Activated CD4-positive, alpha-beta memory T cell treated with anti-CD3 and anti-CD28 coated beads, Interleukin-2, amount 10 ng/mL, durations not matched to agents 7 days and 5 days (primary cell): ENCODE measurements at regions of chr16 and their contacts with region 1.

Region 1: GRCh38 chr16:50024684-50025536 is at the start of gene CNEP1R1:
- DNase-seq: peak; percentile 95
- H3K4me3 Mint-ChIP-seq: peak within 1 kb of the TSS; percentile 96
- H3K27ac Mint-ChIP-seq: peak within 1 kb of the TSS; percentile 87
- H3K4me1 Mint-ChIP-seq: peaks cover 29% of the 10 kb centered on the region
- H3K27me3 Mint-ChIP-seq: peaks cover 5% of the 10 kb centered on the region
- total RNA-seq, gene CNEP1R1: 30.1 to 36.1 TPM

Region 2: GRCh38 chr16:49709057-49709456 is 315.9 kb before region 1 on chr16:
- CTCF ChIA-PET with region 1: no interaction called
- POLR2A ChIA-PET with region 1: no interaction called
- DNase-seq: no peak
- H3K4me3 Mint-ChIP-seq: no peak overlapping the region
- H3K27ac Mint-ChIP-seq: no peak overlapping the region
- H3K4me1 Mint-ChIP-seq: no peaks in the 10 kb centered on the region
- H3K27me3 Mint-ChIP-seq: no peaks in the 10 kb centered on the region

Region 3: GRCh38 chr16:50038756-50039529 is 14.0 kb after region 1 on chr16:
- CTCF ChIA-PET with region 1: interaction called, 42 read pairs
- POLR2A ChIA-PET with region 1: interaction called, 11 read pairs
- DNase-seq: no peak
- H3K4me3 Mint-ChIP-seq: no peak overlapping the region
- H3K27ac Mint-ChIP-seq: no peak overlapping the region
- H3K4me1 Mint-ChIP-seq: peaks cover 13% of the 10 kb centered on the region
- H3K27me3 Mint-ChIP-seq: peaks cover 14% of the 10 kb centered on the region

Region 4: GRCh38 chr16:50152807-50153452 is 128.0 kb after region 1 on chr16 and contains the start of gene TENT4B:
- CTCF ChIA-PET with region 1: interaction called, 15 read pairs
- POLR2A ChIA-PET with region 1: interaction called, 13 read pairs
- DNase-seq: peak; percentile 89
- H3K4me3 Mint-ChIP-seq: peak within 1 kb of the TSS; percentile 77
- H3K27ac Mint-ChIP-seq: peak within 1 kb of the TSS; percentile 78
- H3K4me1 Mint-ChIP-seq: peaks cover 31% of the 10 kb centered on the region
- H3K27me3 Mint-ChIP-seq: no peaks in the 10 kb centered on the region
- total RNA-seq, gene TENT4B: 17.5 to 18.0 TPM

Region 5: DNA sequence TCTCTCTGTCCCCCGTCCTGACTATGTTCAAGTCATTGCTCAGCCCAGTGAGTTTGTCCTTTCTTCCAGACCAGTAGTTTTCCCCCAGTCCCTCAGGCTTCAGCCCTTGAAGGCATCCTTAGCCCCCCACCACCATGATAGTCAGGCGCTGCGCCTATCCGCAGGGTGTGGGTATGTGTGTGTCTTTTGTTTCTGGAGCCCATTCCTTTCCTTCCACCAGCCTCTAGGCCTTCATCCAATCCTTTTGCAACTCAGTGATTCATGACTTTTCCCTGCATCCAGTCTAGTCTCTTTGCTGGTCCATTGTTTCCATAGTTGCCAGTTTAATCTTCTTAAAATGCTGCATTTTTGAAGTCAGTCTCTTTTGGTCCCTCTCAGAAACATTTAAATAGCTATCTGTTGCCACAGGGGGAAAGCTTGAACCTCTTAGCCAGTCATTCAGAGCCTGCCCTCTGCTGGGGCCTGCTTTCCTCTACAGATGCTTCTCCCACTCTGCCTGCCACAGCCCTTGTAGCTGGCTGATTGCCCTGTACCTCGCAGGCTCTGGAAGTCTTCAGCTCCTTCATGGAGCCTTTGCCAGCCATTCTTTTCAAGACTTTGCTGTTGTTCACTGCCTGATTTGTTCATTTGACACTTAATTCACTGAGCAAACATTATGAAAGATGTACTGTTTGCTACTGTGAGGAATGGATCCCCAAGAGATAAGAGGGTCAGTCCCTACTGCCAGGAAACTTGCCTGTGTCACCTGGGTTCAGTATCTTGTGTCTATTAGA is 185.5 kb after region 1 on chr16:
- CTCF ChIA-PET with region 1: interaction called, 191 read pairs
- POLR2A ChIA-PET with region 1: interaction called, 26 read pairs
- DNase-seq: peak; percentile 76
- H3K4me3 Mint-ChIP-seq: no peak overlapping the region
- H3K27ac Mint-ChIP-seq: peak overlapping the region; percentile 4
- H3K4me1 Mint-ChIP-seq: peaks cover 35% of the 10 kb centered on the region
- H3K27me3 Mint-ChIP-seq: no peaks in the 10 kb centered on the region

Region 6: GRCh38 chr16:50354629-50355456 is 329.9 kb after region 1 on chr16:
- CTCF ChIA-PET with region 1: interaction called, 15 read pairs
- POLR2A ChIA-PET with region 1: interaction called, 3 read pairs
- DNase-seq: no peak
- H3K4me3 Mint-ChIP-seq: no peak overlapping the region
- H3K27ac Mint-ChIP-seq: no peak overlapping the region
- H3K4me1 Mint-ChIP-seq: peaks cover 30% of the 10 kb centered on the region
- H3K27me3 Mint-ChIP-seq: no peaks in the 10 kb centered on the region